ENCODE measurements at regions of chr6 and their contacts with region 1.

Region 1: GRCh38 chr6:21664314-21665109 is 71.0 kb downstream of the SOX4 start:
- DNase-seq: peak; percentile 45
- H3K4me3 ChIP-seq: peak overlapping the region; percentile 41
- H3K27ac ChIP-seq: no peak overlapping the region
- H3K4me1 ChIP-seq: peaks cover 19% of the 10 kb centered on the region
- H3K27me3 ChIP-seq: peaks cover 76% of the 10 kb centered on the region
- CTCF ChIP-seq: no peak

Region 2: GRCh38 chr6:21653905-21654304 is 10.6 kb before region 1 on chr6:
- CTCF ChIA-PET with region 1: no interaction called
- POLR2A ChIA-PET with region 1: interaction called, 23 read pairs
- intact Hi-C with region 1: no loop called
- DNase-seq: no peak
- H3K4me3 ChIP-seq: no peak overlapping the region
- H3K27ac ChIP-seq: no peak overlapping the region
- H3K4me1 ChIP-seq: no peaks in the 10 kb centered on the region
- H3K27me3 ChIP-seq: no peaks in the 10 kb centered on the region
- CTCF ChIP-seq: no peak

Region 3: GRCh38 chr6:22036275-22036674 is 371.8 kb after region 1 on chr6:
- CTCF ChIA-PET with region 1: no interaction called
- POLR2A ChIA-PET with region 1: no interaction called
- intact Hi-C with region 1: no loop called
- DNase-seq: no peak
- H3K4me3 ChIP-seq: no peak overlapping the region
- H3K27ac ChIP-seq: no peak overlapping the region
- H3K4me1 ChIP-seq: no peaks in the 10 kb centered on the region
- H3K27me3 ChIP-seq: no peaks in the 10 kb centered on the region
- CTCF ChIP-seq: no peak